H1 (cell line): ENCODE measurements at regions of chr9 and their contacts with region 1.

Region 1: DNA sequence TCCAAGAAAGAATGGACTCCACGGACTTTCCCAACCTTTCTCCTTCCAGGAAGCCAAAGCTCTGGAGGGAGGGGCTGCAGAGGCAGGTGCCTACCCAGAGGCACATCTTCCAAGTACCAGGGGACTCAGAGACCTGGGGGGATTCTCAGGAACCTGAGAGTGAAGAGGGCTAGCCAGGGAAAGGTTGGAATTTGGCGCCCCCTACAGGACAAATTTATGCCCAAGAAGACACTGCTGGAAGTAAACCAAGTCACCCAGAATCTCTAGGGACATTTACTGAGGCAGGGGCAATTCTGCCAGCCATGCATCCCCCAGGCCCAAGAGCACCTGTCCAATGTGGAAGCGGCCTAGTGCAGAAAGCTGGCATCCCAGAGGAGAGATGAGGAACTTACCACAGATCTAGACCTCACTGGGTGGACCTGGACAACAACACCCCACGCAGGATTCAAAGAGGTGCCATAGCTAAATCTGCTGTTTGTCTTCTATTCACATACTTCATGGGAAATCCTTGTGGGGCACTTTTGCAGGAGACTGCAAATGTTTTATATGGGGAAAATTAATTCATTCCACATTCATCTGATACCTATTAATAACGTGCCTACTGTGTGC is 25.9 kb upstream of the IDNK start:
- DNase-seq: peak in 1 of 2 experiments; percentile 87
- H3K4me3 ChIP-seq: no peak overlapping the region
- H3K27ac ChIP-seq: no peak overlapping the region
- H3K4me1 ChIP-seq: no peaks in the 10 kb centered on the region
- H3K27me3 ChIP-seq: no peaks in the 10 kb centered on the region
- CTCF ChIP-seq: peak; percentile 43 to 76 (median 71)
- EP300 ChIP-seq: no peak
- POLR2A ChIP-seq: no peak
- RAD21 ChIP-seq: peak; percentile 83 to 89

Region 2: GRCh38 chr9:83219152-83219923 is 377.7 kb before region 1 on chr9:
- CTCF ChIA-PET with region 1: interaction called, 26 read pairs
- POLR2A ChIA-PET with region 1: no interaction called
- DNase-seq: peak; percentile 79 to 93
- H3K4me3 ChIP-seq: peak overlapping the region; percentile 47 to 76 (median 66)
- H3K27ac ChIP-seq: no peak overlapping the region
- H3K4me1 ChIP-seq: peaks cover 0 to 3% (median 0%) of the 10 kb centered on the region in 4 experiments; a peak in 2 of 7 replicates
- H3K27me3 ChIP-seq: no peaks in the 10 kb centered on the region
- CTCF ChIP-seq: peak; percentile 65 to 86 (median 78)
- EP300 ChIP-seq: no peak
- POLR2A ChIP-seq: no peak
- RAD21 ChIP-seq: peak; percentile 94 to 97

Region 3: GRCh38 chr9:83538172-83538889 is 58.7 kb before region 1 on chr9 and contains the start of gene FRMD3:
- CTCF ChIA-PET with region 1: interaction called, 25 read pairs
- POLR2A ChIA-PET with region 1: no interaction called
- DNase-seq: peak; percentile 38 to 82
- H3K4me3 ChIP-seq: peak within 1 kb of the TSS; percentile 41 to 69 (median 47)
- H3K27ac ChIP-seq: no peak within 1 kb of the TSS
- H3K4me1 ChIP-seq: peaks cover 0 to 10% (median 4%) of the 10 kb centered on the region in 4 experiments; a peak in 6 of 7 replicates
- H3K27me3 ChIP-seq: peaks cover 20 to 51% (median 40%) of the 10 kb centered on the region in 4 experiments
- CTCF ChIP-seq: peak; percentile 68 to 82 (median 72)
- EP300 ChIP-seq: no peak
- POLR2A ChIP-seq: no peak
- RAD21 ChIP-seq: peak; percentile 33 to 58; a peak in 3 of 4 replicates
- total RNA-seq, gene FRMD3: 1.3 and 1.4 TPM in 2 replicates

Region 4: GRCh38 chr9:83563360-83563759 is 33.6 kb before region 1 on chr9:
- CTCF ChIA-PET with region 1: interaction called, 10 read pairs
- POLR2A ChIA-PET with region 1: no interaction called
- DNase-seq: no peak
- H3K4me3 ChIP-seq: no peak overlapping the region
- H3K27ac ChIP-seq: no peak overlapping the region
- H3K4me1 ChIP-seq: no peaks in the 10 kb centered on the region
- H3K27me3 ChIP-seq: no peaks in the 10 kb centered on the region
- CTCF ChIP-seq: no peak
- EP300 ChIP-seq: no peak
- POLR2A ChIP-seq: no peak
- RAD21 ChIP-seq: no peak

Region 5: GRCh38 chr9:83583151-83584014 is 13.6 kb before region 1 on chr9:
- CTCF ChIA-PET with region 1: interaction called, 32 read pairs
- POLR2A ChIA-PET with region 1: no interaction called
- DNase-seq: peak; percentile 47 to 80
- H3K4me3 ChIP-seq: no peak overlapping the region
- H3K27ac ChIP-seq: no peak overlapping the region
- H3K4me1 ChIP-seq: no peaks in the 10 kb centered on the region; a peak in 2 of 7 replicates
- H3K27me3 ChIP-seq: no peaks in the 10 kb centered on the region
- CTCF ChIP-seq: peak; percentile 22 to 85 (median 67)
- EP300 ChIP-seq: 0 out of 3 replicates have a peak, but pooled peaks of 1 of the 2 experiments have one; percentile 30
- POLR2A ChIP-seq: no peak
- RAD21 ChIP-seq: peak; percentile 59

Region 6: GRCh38 chr9:83622939-83623678 is 26.1 kb after region 1 on chr9 and contains the start of gene IDNK:
- CTCF ChIA-PET with region 1: interaction called, 13 read pairs
- POLR2A ChIA-PET with region 1: no interaction called
- DNase-seq: peak in 1 of 2 experiments; percentile 78
- H3K4me3 ChIP-seq: peak within 1 kb of the TSS; percentile 73 to 74 (median 74)
- H3K27ac ChIP-seq: no peak within 1 kb of the TSS
- H3K4me1 ChIP-seq: peaks cover 0 to 2% (median 0%) of the 10 kb centered on the region in 4 experiments; a peak in 3 of 7 replicates
- H3K27me3 ChIP-seq: no peaks in the 10 kb centered on the region; a peak in 1 of 7 replicates
- CTCF ChIP-seq: no peak
- EP300 ChIP-seq: no peak
- POLR2A ChIP-seq: peak in 1 of 2 experiments; percentile 68; a peak in 1 of 3 replicates
- RAD21 ChIP-seq: no peak
- total RNA-seq, gene IDNK: 0.38 and 0.48 TPM in 2 replicates